Activated CD8-positive, alpha-beta T cell treated with anti-CD3 and anti-CD28 coated beads, Interleukin-2, amount 10 ng/mL, durations not matched to agents 7 days and 5 days (primary cell): ENCODE measurements at regions of chr5 and their contacts with region 1.

Region 1: DNA sequence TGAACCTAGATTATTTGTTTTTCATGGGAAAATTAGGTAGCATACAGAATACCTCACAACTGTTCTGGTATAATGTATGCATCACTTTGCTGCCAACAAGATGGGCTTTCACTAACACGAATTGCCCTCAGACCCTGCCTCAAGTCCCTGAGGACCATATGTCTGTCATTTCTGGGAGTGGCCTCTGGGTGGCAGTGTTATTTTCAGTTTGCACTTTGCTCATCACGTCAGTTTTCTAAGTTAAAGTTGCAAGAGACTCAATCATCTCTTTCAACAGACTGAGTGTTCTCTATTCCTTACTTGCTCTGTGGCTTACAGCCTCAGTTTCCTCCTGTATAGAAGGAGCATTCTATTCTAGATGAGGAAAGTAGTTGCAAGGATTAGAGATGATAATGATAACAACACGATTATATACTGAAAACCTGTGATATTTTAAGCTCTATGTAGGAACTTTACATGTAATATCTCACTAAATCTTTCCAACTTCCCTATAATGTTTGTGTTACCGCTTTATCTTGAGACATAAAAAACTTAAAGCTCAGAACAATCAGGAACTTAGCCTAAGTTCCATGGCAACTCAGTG is 55.7 kb downstream of the TSSK1B start:
- DNase-seq: peak; percentile 75
- ATAC-seq: peak; percentile 58
- H3K4me3 Mint-ChIP-seq: peak overlapping the region; percentile 68
- H3K27ac Mint-ChIP-seq: peak overlapping the region; percentile 79
- H3K4me1 Mint-ChIP-seq: peaks cover 72% of the 10 kb centered on the region
- H3K27me3 Mint-ChIP-seq: peaks cover 6% of the 10 kb centered on the region

Region 2: DNA sequence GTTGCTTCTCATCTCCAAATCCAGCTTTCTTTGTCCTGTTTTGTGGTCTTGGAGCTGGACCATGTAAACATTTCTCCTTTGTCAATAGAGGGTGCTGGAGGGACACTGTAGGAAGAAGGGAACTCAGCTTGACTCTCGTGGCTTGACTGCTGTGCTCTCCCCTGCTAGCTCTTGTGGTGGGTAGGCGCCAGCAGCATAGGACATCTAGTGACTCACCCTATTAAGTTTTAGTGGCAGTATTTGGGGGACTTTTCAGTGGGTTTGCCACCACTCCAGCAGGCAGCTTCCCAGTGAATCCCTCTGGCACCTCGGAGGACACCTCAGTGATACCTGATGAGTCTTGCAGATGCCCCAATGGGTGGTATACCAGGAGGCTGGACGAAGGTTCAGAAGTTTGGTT is 42.1 kb before region 1 on chr5:
- CTCF ChIA-PET with region 1: interaction called, 26 read pairs
- POLR2A ChIA-PET with region 1: no interaction called
- DNase-seq: peak; percentile 54
- ATAC-seq: peak; percentile 80
- H3K4me3 Mint-ChIP-seq: no peak overlapping the region
- H3K27ac Mint-ChIP-seq: no peak overlapping the region
- H3K4me1 Mint-ChIP-seq: peaks cover 38% of the 10 kb centered on the region
- H3K27me3 Mint-ChIP-seq: peaks cover 10% of the 10 kb centered on the region

Region 3: DNA sequence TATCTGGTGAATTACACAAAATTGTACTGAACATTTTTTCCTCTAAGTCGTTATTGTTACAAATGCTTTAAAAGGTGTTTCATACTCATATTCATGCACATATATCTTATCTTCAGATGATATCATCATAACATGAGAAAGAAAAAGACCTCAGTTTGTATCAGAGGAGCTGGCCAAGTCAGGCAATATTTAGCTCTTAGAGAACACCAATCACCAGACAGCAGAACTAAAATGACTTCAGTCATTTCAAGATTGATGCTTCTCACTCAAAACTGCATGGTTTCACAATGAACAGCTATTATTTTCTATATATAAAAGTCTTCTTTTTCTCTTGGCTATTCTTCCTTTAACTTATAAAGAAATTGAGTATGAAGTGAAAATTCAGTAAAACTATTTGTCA is 11.2 kb after region 1 on chr5:
- CTCF ChIA-PET with region 1: interaction called, 10 read pairs
- POLR2A ChIA-PET with region 1: no interaction called
- DNase-seq: no peak
- ATAC-seq: no peak
- H3K4me3 Mint-ChIP-seq: no peak overlapping the region
- H3K27ac Mint-ChIP-seq: no peak overlapping the region
- H3K4me1 Mint-ChIP-seq: no peaks in the 10 kb centered on the region
- H3K27me3 Mint-ChIP-seq: peaks cover 53% of the 10 kb centered on the region

Region 4: DNA sequence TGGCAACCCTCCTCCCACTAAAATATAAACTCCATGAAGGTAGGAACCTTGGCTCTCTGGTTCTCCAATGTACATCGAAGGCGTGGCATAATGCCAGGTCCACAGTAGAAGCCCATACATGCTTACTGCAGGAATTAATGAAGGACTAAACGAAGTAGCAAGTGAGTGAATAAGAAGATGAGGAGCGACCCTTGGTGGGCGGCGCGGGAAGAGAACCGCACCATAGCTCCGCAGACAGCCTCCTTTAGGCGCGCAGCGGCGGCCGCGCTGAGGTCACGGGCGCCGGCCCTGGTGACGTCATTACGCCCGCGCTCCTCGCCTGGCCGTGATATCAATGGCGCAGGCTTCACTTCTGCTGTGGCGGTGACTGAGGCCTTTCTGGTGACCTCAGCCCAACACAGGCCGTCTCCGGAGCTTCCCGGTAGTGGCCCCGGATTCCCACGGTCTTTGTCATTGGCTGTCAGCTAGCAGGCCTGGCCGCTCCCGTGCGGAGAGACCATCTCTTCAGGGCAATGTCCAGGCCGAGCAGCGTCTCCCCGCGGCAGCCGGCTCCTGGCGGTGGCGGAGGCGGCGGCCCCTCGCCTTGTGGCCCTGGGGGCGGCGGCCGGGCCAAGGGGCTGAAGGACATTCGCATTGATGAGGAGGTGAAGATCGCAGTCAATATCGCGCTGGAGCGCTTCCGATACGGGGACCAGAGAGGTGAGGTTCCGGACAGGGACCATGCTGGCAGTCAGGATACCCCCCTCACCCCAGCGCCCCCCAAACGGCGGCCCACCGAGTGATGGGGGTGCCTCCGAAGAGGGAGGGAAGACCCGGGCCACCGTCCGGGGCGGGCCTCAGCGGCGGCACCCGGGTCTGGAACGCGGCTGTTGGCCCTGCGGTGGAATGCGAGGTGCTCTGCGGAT is 134.6 kb after region 1 on chr5 and contains the start of gene YTHDC2:
- CTCF ChIA-PET with region 1: interaction called, 43 read pairs
- POLR2A ChIA-PET with region 1: interaction called, 5 read pairs
- DNase-seq: peak; percentile 90
- ATAC-seq: peak; percentile 94
- H3K4me3 Mint-ChIP-seq: peak within 1 kb of the TSS; percentile 92
- H3K27ac Mint-ChIP-seq: peak within 1 kb of the TSS; percentile 92
- H3K4me1 Mint-ChIP-seq: peaks cover 39% of the 10 kb centered on the region
- H3K27me3 Mint-ChIP-seq: peaks cover 16% of the 10 kb centered on the region
- total RNA-seq, gene YTHDC2: 30.3 to 34.1 TPM

Region 5: GRCh38 chr5:113574417-113574816 is 195.4 kb after region 1 on chr5:
- CTCF ChIA-PET with region 1: no interaction called
- POLR2A ChIA-PET with region 1: no interaction called
- DNase-seq: no peak
- ATAC-seq: no peak
- H3K4me3 Mint-ChIP-seq: no peak overlapping the region
- H3K27ac Mint-ChIP-seq: no peak overlapping the region
- H3K4me1 Mint-ChIP-seq: peaks cover 6% of the 10 kb centered on the region
- H3K27me3 Mint-ChIP-seq: no peaks in the 10 kb centered on the region

Region 6: GRCh38 chr5:113606298-113607134 is 227.5 kb after region 1 on chr5:
- CTCF ChIA-PET with region 1: interaction called, 11 read pairs
- POLR2A ChIA-PET with region 1: no interaction called
- DNase-seq: peak; percentile 68
- ATAC-seq: peak; percentile 87
- H3K4me3 Mint-ChIP-seq: no peak overlapping the region
- H3K27ac Mint-ChIP-seq: no peak overlapping the region
- H3K4me1 Mint-ChIP-seq: peaks cover 15% of the 10 kb centered on the region
- H3K27me3 Mint-ChIP-seq: peaks cover 26% of the 10 kb centered on the region